Caco-2 (cell line): ENCODE measurements at regions of chr7 and their contacts with region 1.

Region 1: GRCh38 chr7:7595451-7595850 is 28.8 kb downstream of the MIOS start:
- DNase-seq: no peak
- H3K4me3 ChIP-seq: no peak overlapping the region
- H3K4me3 Mint-ChIP-seq: no peak overlapping the region
- H3K27ac Mint-ChIP-seq: no peak overlapping the region
- H3K4me1 ChIP-seq: no peaks in the 10 kb centered on the region
- H3K4me1 Mint-ChIP-seq: no peaks in the 10 kb centered on the region
- H3K27me3 ChIP-seq: no peaks in the 10 kb centered on the region
- H3K27me3 Mint-ChIP-seq: no peaks in the 10 kb centered on the region
- CTCF ChIP-seq: peak in 1 of 2 experiments; percentile 7

Region 2: GRCh38 chr7:7408001-7408770 is 187.3 kb before region 1 on chr7:
- CTCF ChIA-PET with region 1: no interaction called
- POLR2A ChIA-PET with region 1: no interaction called
- intact Hi-C with region 1: no loop called
- DNase-seq: peak in 1 of 2 experiments; percentile 37
- H3K4me3 ChIP-seq: no peak overlapping the region
- H3K4me3 Mint-ChIP-seq: no peak overlapping the region
- H3K27ac Mint-ChIP-seq: peak overlapping the region; percentile 9
- H3K4me1 ChIP-seq: 0 out of 2 replicates have a peak, but pooled peaks cover 9% of the 10 kb centered on the region
- H3K4me1 Mint-ChIP-seq: peaks cover 7% of the 10 kb centered on the region
- H3K27me3 ChIP-seq: no peaks in the 10 kb centered on the region
- H3K27me3 Mint-ChIP-seq: no peaks in the 10 kb centered on the region
- CTCF ChIP-seq: no peak

Region 3: GRCh38 chr7:7428806-7429205 is 166.6 kb before region 1 on chr7:
- CTCF ChIA-PET with region 1: no interaction called
- POLR2A ChIA-PET with region 1: no interaction called
- intact Hi-C with region 1: no loop called
- DNase-seq: no peak
- H3K4me3 ChIP-seq: no peak overlapping the region
- H3K4me3 Mint-ChIP-seq: no peak overlapping the region
- H3K27ac Mint-ChIP-seq: no peak overlapping the region
- H3K4me1 ChIP-seq: no peaks in the 10 kb centered on the region
- H3K4me1 Mint-ChIP-seq: no peaks in the 10 kb centered on the region
- H3K27me3 ChIP-seq: no peaks in the 10 kb centered on the region
- H3K27me3 Mint-ChIP-seq: no peaks in the 10 kb centered on the region
- CTCF ChIP-seq: no peak

Region 4: GRCh38 chr7:7535691-7536090 is 59.8 kb before region 1 on chr7 and contains the start of gene COL28A1:
- CTCF ChIA-PET with region 1: no interaction called
- POLR2A ChIA-PET with region 1: no interaction called
- intact Hi-C with region 1: no loop called
- DNase-seq: no peak
- H3K4me3 ChIP-seq: no peak within 1 kb of the TSS
- H3K4me3 Mint-ChIP-seq: no peak within 1 kb of the TSS
- H3K27ac Mint-ChIP-seq: no peak within 1 kb of the TSS
- H3K4me1 ChIP-seq: no peaks in the 10 kb centered on the region
- H3K4me1 Mint-ChIP-seq: no peaks in the 10 kb centered on the region
- H3K27me3 ChIP-seq: no peaks in the 10 kb centered on the region
- H3K27me3 Mint-ChIP-seq: no peaks in the 10 kb centered on the region
- CTCF ChIP-seq: no peak
- total RNA-seq, gene COL28A1: 6.2 and 7.3 TPM in 2 replicates

Region 5: DNA sequence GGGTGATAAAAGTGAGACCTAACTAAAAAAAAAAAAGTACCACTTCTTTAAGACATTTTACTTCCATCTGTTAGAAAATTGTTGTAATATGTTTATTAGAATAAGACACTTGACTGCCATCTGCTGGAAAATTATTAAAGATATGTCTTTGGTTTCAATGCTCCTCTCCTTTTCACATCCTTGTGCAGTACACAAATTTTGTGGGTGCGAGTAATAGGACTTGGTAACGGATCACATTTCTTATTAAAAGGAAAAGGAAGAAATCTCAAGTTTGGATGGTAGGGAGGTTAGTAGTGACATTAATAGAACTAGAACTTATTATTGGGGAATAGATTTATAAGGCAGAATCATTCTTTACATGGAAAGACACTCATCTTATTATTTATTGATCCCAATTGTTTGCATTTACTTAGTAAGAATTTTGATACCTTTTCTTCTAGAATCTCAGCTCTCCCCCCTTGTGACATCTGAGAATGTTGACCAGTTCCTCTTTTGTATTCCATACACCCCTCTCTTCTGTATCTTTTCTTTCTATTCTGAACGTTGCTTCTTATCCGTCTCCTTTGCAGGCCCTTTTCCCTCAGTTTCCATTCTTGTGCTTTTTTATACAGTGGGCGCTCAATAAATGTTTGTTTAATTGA is 166.0 kb after region 1 on chr7:
- CTCF ChIA-PET with region 1: no interaction called
- POLR2A ChIA-PET with region 1: no interaction called
- intact Hi-C with region 1: loop called (anchors 10 kb)
- DNase-seq: peak in 1 of 2 experiments; percentile 10
- H3K4me3 ChIP-seq: no peak overlapping the region
- H3K4me3 Mint-ChIP-seq: no peak overlapping the region
- H3K27ac Mint-ChIP-seq: no peak overlapping the region
- H3K4me1 ChIP-seq: peaks cover 33% of the 10 kb centered on the region
- H3K4me1 Mint-ChIP-seq: peaks cover 32% of the 10 kb centered on the region
- H3K27me3 ChIP-seq: no peaks in the 10 kb centered on the region
- H3K27me3 Mint-ChIP-seq: no peaks in the 10 kb centered on the region
- CTCF ChIP-seq: peak; percentile 6 to 35